B cell (primary cell): ENCODE measurements at regions of chr19 and their contacts with region 1.

Region 1: DNA sequence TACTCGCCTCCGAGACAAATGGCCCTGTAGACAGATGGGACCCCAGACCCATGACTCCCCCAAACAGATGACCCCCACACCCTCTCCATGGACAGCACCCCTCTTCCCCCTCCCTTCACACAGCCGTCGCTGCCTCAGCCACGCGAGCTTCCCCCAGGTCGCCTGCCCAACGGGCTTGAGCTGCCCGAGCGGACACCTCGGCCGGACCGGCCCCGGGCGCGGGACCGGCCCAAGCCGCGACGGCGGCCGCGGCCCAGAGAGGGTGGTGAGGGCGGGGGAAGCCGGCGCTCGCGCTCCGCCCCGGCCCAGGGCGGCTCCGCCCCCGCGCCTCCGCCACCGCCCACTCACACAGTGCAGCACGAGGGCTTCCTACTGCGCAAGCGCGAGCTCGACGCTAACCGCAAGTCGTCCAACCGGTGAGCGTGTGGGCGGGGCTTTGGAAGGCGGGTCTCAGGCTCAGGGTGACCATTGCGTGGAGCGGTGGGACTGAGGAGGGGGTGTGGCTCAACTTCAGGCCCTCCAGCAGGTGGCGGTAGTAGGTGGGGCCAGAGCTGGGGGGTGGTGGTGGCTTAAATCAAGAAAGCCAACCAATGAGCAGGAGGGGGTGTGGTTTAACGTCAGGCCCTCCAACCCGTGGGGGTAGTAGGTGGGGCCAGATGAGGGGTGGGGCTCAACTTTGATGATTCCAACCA is 6.2 kb upstream of the SHKBP1 start:
- DNase-seq: peak; percentile 100
- ATAC-seq: peak; percentile 93
- H3K4me3 ChIP-seq: peak overlapping the region in 3 of 5 experiments; percentile 36 to 47 (median 37)
- H3K4me3 Mint-ChIP-seq: peak overlapping the region; percentile 70
- H3K27ac ChIP-seq: peak overlapping the region in 1 of 2 donors; percentile 33
- H3K27ac Mint-ChIP-seq: peak overlapping the region; percentile 83
- H3K4me1 ChIP-seq: peaks cover 24 to 27% of the 10 kb centered on the region in 2 donors
- H3K4me1 Mint-ChIP-seq: peaks cover 20% of the 10 kb centered on the region
- H3K27me3 ChIP-seq: peaks cover 0 to 32% (median 21%) of the 10 kb centered on the region in 4 experiments
- H3K27me3 Mint-ChIP-seq: peaks cover 4% of the 10 kb centered on the region
- CTCF ChIP-seq: peak; percentile 54

Region 2: DNA sequence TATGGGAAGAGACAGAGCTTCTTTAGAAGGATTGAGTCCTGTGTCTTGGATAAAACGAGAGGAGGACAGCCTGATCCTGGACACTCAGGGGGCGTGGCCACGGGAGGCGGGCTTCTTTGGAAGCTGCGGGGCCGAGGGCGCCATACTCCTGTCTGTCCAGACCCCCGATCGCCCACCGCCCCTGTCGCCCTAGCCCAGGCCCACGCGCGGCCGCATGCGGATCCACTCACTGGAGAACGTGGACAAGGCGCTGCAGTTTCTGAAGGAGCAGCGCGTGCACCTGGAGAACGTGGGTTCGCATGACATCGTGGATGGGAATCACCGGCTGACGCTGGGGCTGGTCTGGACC is 80.6 kb before region 1 on chr19:
- CTCF ChIA-PET with region 1: no interaction called
- POLR2A ChIA-PET with region 1: no interaction called
- intact Hi-C with region 1: no loop called
- DNase-seq: no peak
- ATAC-seq: no peak
- H3K4me3 ChIP-seq: no peak overlapping the region
- H3K4me3 Mint-ChIP-seq: no peak overlapping the region
- H3K27ac ChIP-seq: no peak overlapping the region
- H3K27ac Mint-ChIP-seq: no peak overlapping the region
- H3K4me1 ChIP-seq: peaks cover 0 to 3% of the 10 kb centered on the region in 2 donors
- H3K4me1 Mint-ChIP-seq: peaks cover 6% of the 10 kb centered on the region
- H3K27me3 ChIP-seq: peaks cover 0 to 32% (median 3%) of the 10 kb centered on the region in 4 experiments
- H3K27me3 Mint-ChIP-seq: peaks cover 35% of the 10 kb centered on the region
- CTCF ChIP-seq: no peak

Region 3: GRCh38 chr19:40549007-40549708 is 21.3 kb before region 1 on chr19:
- CTCF ChIA-PET with region 1: interaction called, 5 read pairs
- POLR2A ChIA-PET with region 1: interaction called, 10 read pairs
- intact Hi-C with region 1: no loop called
- DNase-seq: peak; percentile 70
- ATAC-seq: peak; percentile 82
- H3K4me3 ChIP-seq: no peak overlapping the region
- H3K4me3 Mint-ChIP-seq: no peak overlapping the region
- H3K27ac ChIP-seq: no peak overlapping the region
- H3K27ac Mint-ChIP-seq: peak overlapping the region; percentile 22
- H3K4me1 ChIP-seq: peaks cover 4% of the 10 kb centered on the region in 2 donors
- H3K4me1 Mint-ChIP-seq: peaks cover 10% of the 10 kb centered on the region
- H3K27me3 ChIP-seq: peaks cover 0 to 49% (median 28%) of the 10 kb centered on the region in 4 experiments
- H3K27me3 Mint-ChIP-seq: peaks cover 48% of the 10 kb centered on the region
- CTCF ChIP-seq: peak; percentile 55

Region 4: DNA sequence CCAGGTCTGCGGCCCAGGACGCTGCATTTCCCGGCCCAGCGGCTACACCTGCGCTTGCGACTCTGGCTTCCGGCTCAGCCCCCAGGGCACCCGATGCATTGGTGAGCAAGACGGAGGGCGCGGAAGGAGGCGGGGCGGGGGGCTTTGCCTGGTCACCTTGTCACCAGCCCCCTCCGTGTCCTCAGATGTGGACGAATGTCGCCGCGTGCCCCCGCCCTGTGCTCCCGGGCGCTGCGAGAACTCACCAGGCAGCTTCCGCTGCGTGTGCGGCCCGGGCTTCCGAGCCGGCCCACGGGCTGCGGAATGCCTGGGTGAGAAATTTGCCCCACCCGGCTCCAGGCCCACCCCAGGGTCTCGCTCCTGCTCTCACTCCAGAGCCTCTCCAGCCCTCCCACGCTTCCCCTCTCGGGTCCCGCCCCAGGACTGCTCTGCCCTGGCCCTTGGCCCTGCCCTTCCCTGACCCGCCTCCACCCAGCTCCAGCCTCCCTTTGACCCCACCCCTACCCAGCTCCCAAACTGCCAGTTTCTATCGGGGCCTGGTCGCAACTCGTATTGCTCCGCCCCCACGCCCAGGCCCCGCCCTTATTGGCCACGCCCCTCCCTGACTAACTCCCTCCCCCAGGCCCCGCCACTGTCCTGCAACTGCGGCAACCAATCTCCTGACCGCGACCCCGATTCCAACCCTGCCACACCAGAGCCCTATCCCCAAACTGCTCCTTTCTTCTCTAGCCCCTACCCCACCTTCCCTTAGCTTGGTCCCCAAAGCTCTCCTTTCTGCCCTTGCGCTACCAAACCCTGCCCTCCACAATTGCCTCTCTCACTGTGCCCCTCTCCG is 39.3 kb after region 1 on chr19:
- CTCF ChIA-PET with region 1: interaction called, 21 read pairs
- POLR2A ChIA-PET with region 1: interaction called, 19 read pairs
- intact Hi-C with region 1: loop called (anchors 1 kb)
- DNase-seq: peak; percentile 90
- ATAC-seq: peak; percentile 57
- H3K4me3 ChIP-seq: peak overlapping the region in 4 of 5 experiments; percentile 49 to 72 (median 62)
- H3K4me3 Mint-ChIP-seq: peak overlapping the region; percentile 92
- H3K27ac ChIP-seq: peak overlapping the region; percentile 83 to 93
- H3K27ac Mint-ChIP-seq: peak overlapping the region; percentile 98
- H3K4me1 ChIP-seq: peaks cover 38 to 58% of the 10 kb centered on the region in 2 donors
- H3K4me1 Mint-ChIP-seq: peaks cover 56% of the 10 kb centered on the region
- H3K27me3 ChIP-seq: no peaks in the 10 kb centered on the region
- H3K27me3 Mint-ChIP-seq: no peaks in the 10 kb centered on the region
- CTCF ChIP-seq: no peak